Calu3 (cell line): ENCODE measurements at regions of chr17 and their contacts with region 1.

Region 1: GRCh38 chr17:7045909-7046724 is 2.2 kb upstream of the SLC16A11 start:
- DNase-seq: peak; percentile 90
- H3K4me3 Mint-ChIP-seq: peak overlapping the region; percentile 80
- H3K27ac Mint-ChIP-seq: peak overlapping the region; percentile 99
- H3K4me1 Mint-ChIP-seq: peaks cover 31% of the 10 kb centered on the region
- H3K27me3 Mint-ChIP-seq: no peaks in the 10 kb centered on the region
- CTCF ChIP-seq: peak; percentile 44

Region 2: GRCh38 chr17:7035591-7036368 is 10.3 kb before region 1 on chr17 and contains the start of gene SLC16A13:
- CTCF ChIA-PET with region 1: interaction called, 11 read pairs
- intact Hi-C with region 1: no loop called
- DNase-seq: peak; percentile 92
- H3K4me3 Mint-ChIP-seq: peak within 1 kb of the TSS; percentile 94
- H3K27ac Mint-ChIP-seq: peak within 1 kb of the TSS; percentile 71
- H3K4me1 Mint-ChIP-seq: peaks cover 9% of the 10 kb centered on the region
- H3K27me3 Mint-ChIP-seq: no peaks in the 10 kb centered on the region
- CTCF ChIP-seq: no peak
- total RNA-seq, gene SLC16A13: 10.4 and 11.6 TPM in 2 replicates

Region 3: DNA sequence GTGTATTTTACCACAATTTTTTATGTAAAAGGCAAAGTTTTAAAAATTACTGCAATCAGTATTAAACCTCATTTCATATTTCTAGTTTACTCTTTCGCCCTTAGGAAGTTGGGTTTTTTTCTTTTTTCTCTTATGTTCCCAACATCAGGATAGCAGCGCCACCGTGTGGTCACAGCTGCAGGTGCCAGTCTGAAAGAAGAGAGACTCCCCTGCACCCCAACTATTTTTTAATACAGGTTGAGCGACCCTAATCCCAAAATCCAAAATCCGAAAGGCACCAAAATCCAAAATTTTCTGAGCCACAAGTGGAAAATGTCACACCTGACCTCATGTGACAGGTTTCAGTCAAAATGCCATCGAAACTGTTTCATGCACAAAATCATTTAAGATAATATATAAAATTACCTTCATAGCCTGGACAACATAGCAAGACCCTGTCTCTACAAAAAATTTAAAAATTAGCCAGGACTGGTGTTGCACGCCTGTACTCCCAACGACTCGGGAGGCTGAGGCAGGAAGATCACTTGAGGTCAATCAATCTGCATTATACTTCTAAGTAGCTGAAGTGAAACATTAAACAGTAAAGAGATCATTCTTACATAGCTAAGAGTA is 90.3 kb after region 1 on chr17:
- CTCF ChIA-PET with region 1: interaction called, 18 read pairs
- intact Hi-C with region 1: no loop called
- DNase-seq: peak; percentile 63
- H3K4me3 Mint-ChIP-seq: no peak overlapping the region
- H3K27ac Mint-ChIP-seq: no peak overlapping the region
- H3K4me1 Mint-ChIP-seq: peaks cover 6% of the 10 kb centered on the region
- H3K27me3 Mint-ChIP-seq: no peaks in the 10 kb centered on the region
- CTCF ChIP-seq: peak; percentile 58

Region 4: GRCh38 chr17:7167832-7168231 is 121.7 kb after region 1 on chr17:
- CTCF ChIA-PET with region 1: interaction called, 23 read pairs
- intact Hi-C with region 1: loop called (anchors 2 kb)
- DNase-seq: no peak
- H3K4me3 Mint-ChIP-seq: no peak overlapping the region
- H3K27ac Mint-ChIP-seq: no peak overlapping the region
- H3K4me1 Mint-ChIP-seq: peaks cover 9% of the 10 kb centered on the region
- H3K27me3 Mint-ChIP-seq: no peaks in the 10 kb centered on the region
- CTCF ChIP-seq: no peak

Region 5: GRCh38 chr17:7177196-7177953 is 131.3 kb after region 1 on chr17:
- CTCF ChIA-PET with region 1: interaction called, 20 read pairs
- intact Hi-C with region 1: no loop called
- DNase-seq: peak; percentile 62
- H3K4me3 Mint-ChIP-seq: no peak overlapping the region
- H3K27ac Mint-ChIP-seq: no peak overlapping the region
- H3K4me1 Mint-ChIP-seq: no peaks in the 10 kb centered on the region
- H3K27me3 Mint-ChIP-seq: no peaks in the 10 kb centered on the region
- CTCF ChIP-seq: peak; percentile 65

Region 6: DNA sequence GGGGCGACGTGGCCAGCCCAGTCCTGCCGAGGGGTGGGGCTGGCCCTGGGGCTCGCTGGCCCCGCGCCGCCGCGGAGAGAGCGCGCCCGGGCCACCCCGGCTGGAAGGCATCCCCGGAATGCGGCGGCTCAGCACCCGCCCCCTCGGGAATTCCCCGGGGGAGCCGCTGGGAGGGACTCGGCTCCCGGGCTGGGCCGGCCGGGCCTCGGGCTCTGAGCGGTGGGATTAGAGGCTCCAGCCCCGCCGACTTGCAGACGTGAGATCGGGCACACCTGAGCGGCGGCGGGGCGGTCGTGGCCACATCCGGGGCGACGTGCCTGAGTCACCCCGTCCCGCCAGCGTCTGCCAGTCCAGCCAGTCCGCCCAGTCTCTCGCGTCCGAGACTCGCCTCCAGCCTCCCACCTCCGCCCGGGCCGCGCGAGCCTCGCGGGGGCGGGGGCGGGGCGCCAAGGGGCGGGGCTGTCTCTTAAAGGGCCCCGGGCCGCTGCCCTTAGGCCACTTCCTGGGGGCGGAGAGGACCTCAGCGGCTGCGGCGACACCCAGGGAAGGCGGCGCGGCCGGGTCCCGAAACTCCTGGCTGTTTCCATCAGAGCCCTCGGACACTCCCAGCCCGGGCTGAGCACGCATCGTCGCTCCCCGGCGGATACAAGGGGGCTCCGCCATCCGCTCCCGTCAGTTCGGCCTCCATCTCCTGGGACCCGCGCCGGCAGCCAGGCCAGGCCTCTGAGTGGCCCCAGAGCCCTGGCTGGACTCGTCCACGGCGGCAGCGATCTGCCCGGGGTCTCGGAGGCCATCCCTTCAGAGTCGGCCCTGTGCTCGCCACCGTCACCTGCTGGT is 305.8 kb after region 1 on chr17 and contains the start of gene KCTD11:
- CTCF ChIA-PET with region 1: no interaction called
- intact Hi-C with region 1: loop called (anchors 5 kb)
- DNase-seq: peak; percentile 94
- H3K4me3 Mint-ChIP-seq: peak within 1 kb of the TSS; percentile 93
- H3K27ac Mint-ChIP-seq: peak within 1 kb of the TSS; percentile 95
- H3K4me1 Mint-ChIP-seq: peaks cover 28% of the 10 kb centered on the region
- H3K27me3 Mint-ChIP-seq: peaks cover 20% of the 10 kb centered on the region
- CTCF ChIP-seq: no peak
- total RNA-seq, gene KCTD11: 8.5 and 9.9 TPM in 2 replicates